Activated naive CD4-positive, alpha-beta T cell treated with anti-CD3 and anti-CD28 coated beads for 36 hours (primary cell): ENCODE measurements at regions of chr10 and their contacts with region 1.

Region 1: GRCh38 chr10:102729029-102730026 is 14.4 kb upstream of the WBP1L start:
- DNase-seq: peak; percentile 71
- H3K4me3 Mint-ChIP-seq: no peak overlapping the region
- H3K27ac Mint-ChIP-seq: no peak overlapping the region
- H3K4me1 Mint-ChIP-seq: no peaks in the 10 kb centered on the region
- H3K27me3 Mint-ChIP-seq: no peaks in the 10 kb centered on the region

Region 2: DNA sequence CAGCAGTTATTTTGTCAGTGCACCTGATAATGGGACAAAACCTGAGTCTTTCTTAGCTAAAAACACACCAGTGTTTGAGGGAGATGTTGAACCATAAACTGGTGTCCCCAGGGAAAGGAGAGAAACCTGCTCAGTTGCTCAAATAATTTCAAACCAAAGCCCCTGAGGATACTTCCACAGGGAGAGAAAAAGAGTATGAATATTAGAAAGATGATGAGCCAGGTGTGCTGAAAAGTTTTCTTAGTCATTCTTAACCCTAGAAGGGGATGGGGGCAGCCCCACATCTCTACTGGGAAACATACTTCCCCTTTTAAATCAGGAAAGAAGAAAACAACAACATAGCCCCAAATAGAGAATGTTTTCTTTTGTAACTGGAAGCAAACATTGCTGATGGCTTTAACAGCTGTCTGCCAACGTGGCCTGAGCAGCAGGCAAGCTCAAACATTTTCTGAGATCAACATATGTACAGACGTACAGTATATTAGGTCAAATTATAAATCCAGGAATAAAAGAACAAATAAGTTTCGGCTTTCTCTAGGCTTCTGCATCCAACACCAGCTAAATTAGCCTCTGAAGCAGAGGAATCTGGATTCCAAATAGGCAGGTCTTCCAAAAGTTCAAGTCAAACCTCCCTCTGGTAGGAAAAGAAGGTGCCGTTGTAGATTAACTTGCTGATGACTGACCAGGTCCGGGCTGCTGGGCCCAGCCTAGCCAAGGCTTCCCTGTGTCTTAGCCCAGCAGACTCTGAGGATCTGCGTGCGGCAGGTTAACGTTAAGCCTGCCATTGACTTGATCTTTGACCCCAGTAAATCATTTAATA is 1003.8 kb before region 1 on chr10:
- CTCF ChIA-PET with region 1: no interaction called
- intact Hi-C with region 1: no loop called
- DNase-seq: no peak
- H3K4me3 Mint-ChIP-seq: no peak overlapping the region
- H3K27ac Mint-ChIP-seq: no peak overlapping the region
- H3K4me1 Mint-ChIP-seq: peaks cover 10% of the 10 kb centered on the region
- H3K27me3 Mint-ChIP-seq: peaks cover 10% of the 10 kb centered on the region

Region 3: DNA sequence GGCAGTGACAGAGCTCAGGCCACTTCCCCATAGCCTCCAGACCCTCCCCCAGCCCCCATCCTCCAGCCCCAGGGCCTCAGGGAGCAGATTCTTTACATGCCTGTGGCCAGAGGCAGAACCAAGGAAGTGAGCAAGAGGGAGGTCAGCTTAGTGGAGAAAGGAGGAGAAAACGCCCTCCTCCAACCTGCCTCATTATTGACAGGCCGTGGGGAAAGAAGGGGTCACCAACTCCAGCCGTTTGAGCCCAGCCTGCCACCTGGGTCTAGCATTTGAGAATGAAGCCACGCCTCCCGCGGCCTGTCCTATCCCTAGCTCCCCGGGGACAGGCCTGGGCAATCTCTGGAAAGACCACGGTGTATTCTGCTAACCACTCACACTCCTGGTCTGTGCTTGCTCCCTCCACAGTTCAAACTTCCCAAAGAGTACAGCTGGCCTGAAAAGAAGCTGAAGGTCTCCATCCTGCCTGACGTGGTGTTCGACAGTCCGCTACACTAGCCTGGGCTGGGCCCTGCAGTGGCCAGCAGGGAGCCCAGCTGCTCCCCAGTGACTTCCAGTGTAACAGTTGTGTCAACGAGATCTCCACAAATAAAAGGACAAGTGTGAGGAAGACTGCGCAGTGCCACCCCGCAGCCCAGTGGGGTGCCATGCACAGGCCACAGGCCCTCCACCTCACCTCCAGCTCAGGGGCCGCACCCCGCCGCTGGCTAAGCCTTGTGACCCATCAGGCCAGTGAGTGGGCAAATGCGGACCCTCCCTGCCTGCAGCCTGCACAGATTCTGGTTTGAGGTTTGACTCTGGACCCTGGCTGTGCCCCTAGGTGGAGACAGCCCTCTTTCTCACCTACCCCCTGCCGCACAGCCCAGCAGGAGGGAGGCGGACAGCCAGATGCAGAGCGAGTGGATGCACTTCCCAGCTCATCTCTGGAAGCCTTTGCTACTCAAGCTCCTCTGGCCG is 99.4 kb before region 1 on chr10:
- CTCF ChIA-PET with region 1: no interaction called
- intact Hi-C with region 1: no loop called
- DNase-seq: no peak
- H3K4me3 Mint-ChIP-seq: no peak overlapping the region
- H3K27ac Mint-ChIP-seq: no peak overlapping the region
- H3K4me1 Mint-ChIP-seq: peaks cover 32% of the 10 kb centered on the region
- H3K27me3 Mint-ChIP-seq: no peaks in the 10 kb centered on the region

Region 4: GRCh38 chr10:102904346-102904745 is 175.0 kb after region 1 on chr10:
- CTCF ChIA-PET with region 1: interaction called, 5 read pairs
- intact Hi-C with region 1: loop called (anchors 1 kb)
- DNase-seq: no peak
- H3K4me3 Mint-ChIP-seq: no peak overlapping the region
- H3K27ac Mint-ChIP-seq: no peak overlapping the region
- H3K4me1 Mint-ChIP-seq: no peaks in the 10 kb centered on the region
- H3K27me3 Mint-ChIP-seq: no peaks in the 10 kb centered on the region

Region 5: GRCh38 chr10:103069453-103070331 is 340.4 kb after region 1 on chr10:
- CTCF ChIA-PET with region 1: no interaction called
- intact Hi-C with region 1: loop called (anchors 1 kb)
- DNase-seq: peak; percentile 83
- H3K4me3 Mint-ChIP-seq: no peak overlapping the region
- H3K27ac Mint-ChIP-seq: no peak overlapping the region
- H3K4me1 Mint-ChIP-seq: peaks cover 17% of the 10 kb centered on the region
- H3K27me3 Mint-ChIP-seq: no peaks in the 10 kb centered on the region

Region 6: GRCh38 chr10:103284165-103284564 is 554.8 kb after region 1 on chr10:
- CTCF ChIA-PET with region 1: no interaction called
- intact Hi-C with region 1: no loop called
- DNase-seq: no peak
- H3K4me3 Mint-ChIP-seq: no peak overlapping the region
- H3K27ac Mint-ChIP-seq: no peak overlapping the region
- H3K4me1 Mint-ChIP-seq: peaks cover 4% of the 10 kb centered on the region
- H3K27me3 Mint-ChIP-seq: peaks cover 43% of the 10 kb centered on the region